ENCODE measurements at regions of chr7 and their contacts with region 1.

Region 1: GRCh38 chr7:44477063-44477830 is 13.2 kb downstream of the NUDCD3 start:
- DNase-seq: peak; percentile 46
- H3K4me3 Mint-ChIP-seq: no peak overlapping the region
- H3K27ac Mint-ChIP-seq: no peak overlapping the region
- H3K4me1 Mint-ChIP-seq: peaks cover 12% of the 10 kb centered on the region
- H3K27me3 Mint-ChIP-seq: no peaks in the 10 kb centered on the region

Region 2: GRCh38 chr7:44353668-44354067 is 123.6 kb before region 1 on chr7:
- intact Hi-C with region 1: no loop called
- DNase-seq: no peak
- H3K4me3 Mint-ChIP-seq: no peak overlapping the region
- H3K27ac Mint-ChIP-seq: no peak overlapping the region
- H3K4me1 Mint-ChIP-seq: no peaks in the 10 kb centered on the region
- H3K27me3 Mint-ChIP-seq: peaks cover 55% of the 10 kb centered on the region

Region 3: GRCh38 chr7:44438816-44439215 is 38.4 kb before region 1 on chr7:
- intact Hi-C with region 1: loop called (anchors 5 kb)
- DNase-seq: no peak
- H3K4me3 Mint-ChIP-seq: no peak overlapping the region
- H3K27ac Mint-ChIP-seq: peak overlapping the region; percentile 17
- H3K4me1 Mint-ChIP-seq: peaks cover 19% of the 10 kb centered on the region
- H3K27me3 Mint-ChIP-seq: no peaks in the 10 kb centered on the region

Region 4: DNA sequence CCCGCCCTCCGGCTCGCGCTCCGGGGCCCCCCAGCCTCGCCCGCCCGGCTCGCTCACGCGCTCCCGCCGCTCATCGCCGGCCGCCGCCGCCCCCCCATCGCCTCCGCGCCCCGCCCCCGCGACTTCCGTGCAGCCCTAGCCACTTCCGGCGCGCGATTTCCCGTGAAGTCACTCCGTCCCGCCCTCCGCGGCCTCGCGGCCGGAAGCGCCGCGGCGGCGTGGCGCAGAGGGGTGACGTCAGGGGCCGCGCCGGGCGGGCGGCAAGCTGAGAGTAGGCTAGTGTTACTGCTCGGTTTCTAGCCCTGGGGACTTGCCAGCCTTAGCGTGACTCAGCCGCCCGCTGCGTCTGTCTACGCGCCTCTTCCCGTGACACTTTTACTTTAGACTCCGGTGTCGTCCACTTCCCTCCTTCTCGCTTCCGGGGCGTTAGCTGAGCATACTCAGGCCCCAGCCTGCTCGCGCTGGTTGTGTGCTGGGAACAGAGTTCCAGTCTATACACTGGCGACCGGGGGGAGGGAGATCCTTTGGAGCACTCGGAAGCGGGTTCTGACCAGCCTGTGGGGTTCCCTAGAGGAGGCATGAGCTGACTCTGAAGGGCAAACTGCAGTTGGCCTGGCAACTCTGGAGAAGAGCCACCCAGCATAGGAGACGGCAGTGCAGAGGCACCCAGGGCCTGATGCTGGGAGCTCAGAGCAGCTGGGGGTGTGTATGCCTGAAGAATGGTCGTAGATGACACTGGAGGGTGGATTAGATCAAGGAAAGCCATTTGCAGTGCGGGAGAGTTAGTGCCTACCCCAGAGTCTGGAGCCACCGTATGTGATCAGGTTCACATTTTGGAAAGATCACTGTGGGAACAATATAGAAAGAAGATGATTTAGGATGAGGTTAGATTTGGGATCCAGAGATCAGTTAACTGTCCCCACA is 408.4 kb after region 1 on chr7 and contains the start of gene PURB:
- intact Hi-C with region 1: no loop called
- DNase-seq: peak; percentile 97
- H3K4me3 Mint-ChIP-seq: peak within 1 kb of the TSS; percentile 97
- H3K27ac Mint-ChIP-seq: peak within 1 kb of the TSS; percentile 99
- H3K4me1 Mint-ChIP-seq: peaks cover 35% of the 10 kb centered on the region
- H3K27me3 Mint-ChIP-seq: no peaks in the 10 kb centered on the region
- total RNA-seq, gene PURB: 32.9 and 33.9 TPM in 2 replicates